Panc1 (cell line): ENCODE measurements at regions of chr16 and their contacts with region 1.

Region 1: DNA sequence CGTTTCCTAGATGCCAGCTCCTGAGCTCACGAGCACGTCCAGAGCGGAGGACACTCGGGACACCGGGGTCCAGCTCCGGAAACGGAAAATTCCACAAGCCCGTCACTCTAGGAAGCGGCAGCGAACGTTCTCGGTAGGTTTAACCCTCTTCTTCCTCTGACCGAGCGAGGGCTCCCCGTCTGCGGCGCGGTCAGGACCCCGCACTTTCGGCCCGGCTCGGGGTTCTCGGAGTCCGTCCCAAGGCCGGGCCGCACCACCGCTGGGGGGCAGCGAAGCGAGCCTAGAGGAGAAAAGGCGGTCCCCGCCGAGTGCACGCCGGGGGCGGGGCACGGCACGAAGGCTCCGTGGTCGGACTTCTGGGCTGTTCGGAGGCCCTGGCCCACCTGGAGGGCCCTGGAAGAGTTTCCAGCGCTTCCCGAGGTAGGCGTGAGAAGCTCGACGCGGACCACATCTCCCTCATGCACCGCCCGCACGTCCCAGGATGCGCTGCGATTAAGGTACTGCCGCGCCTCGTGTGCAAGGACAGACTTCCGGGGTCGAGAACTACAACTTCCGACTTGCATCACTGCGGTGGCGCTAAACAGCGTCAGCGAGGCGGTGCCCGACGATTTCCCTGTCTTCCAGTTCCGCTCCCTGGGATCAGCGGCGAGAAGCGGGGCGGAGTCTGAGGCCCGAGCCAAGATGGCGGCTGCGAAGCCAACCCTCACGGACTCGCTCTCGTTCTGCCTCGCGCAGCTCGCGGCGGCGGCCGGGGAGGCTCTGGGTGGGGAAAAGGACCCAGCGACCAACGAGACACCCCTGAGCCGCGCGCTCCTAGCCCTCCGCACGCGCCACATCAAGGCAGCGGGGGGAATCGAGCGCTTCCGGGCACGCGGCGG is at the start of gene ARMC5:
- DNase-seq: peak; percentile 88
- ATAC-seq: peak; percentile 92
- H3K4me3 ChIP-seq: peak within 1 kb of the TSS; percentile 78 to 93
- H3K27ac ChIP-seq: peak within 1 kb of the TSS; percentile 94
- H3K4me1 ChIP-seq: peaks cover 34% of the 10 kb centered on the region
- H3K27me3 ChIP-seq: no peaks in the 10 kb centered on the region
- CTCF ChIP-seq: peak; percentile 87
- total RNA-seq, gene ARMC5: 19.8 TPM

Region 2: DNA sequence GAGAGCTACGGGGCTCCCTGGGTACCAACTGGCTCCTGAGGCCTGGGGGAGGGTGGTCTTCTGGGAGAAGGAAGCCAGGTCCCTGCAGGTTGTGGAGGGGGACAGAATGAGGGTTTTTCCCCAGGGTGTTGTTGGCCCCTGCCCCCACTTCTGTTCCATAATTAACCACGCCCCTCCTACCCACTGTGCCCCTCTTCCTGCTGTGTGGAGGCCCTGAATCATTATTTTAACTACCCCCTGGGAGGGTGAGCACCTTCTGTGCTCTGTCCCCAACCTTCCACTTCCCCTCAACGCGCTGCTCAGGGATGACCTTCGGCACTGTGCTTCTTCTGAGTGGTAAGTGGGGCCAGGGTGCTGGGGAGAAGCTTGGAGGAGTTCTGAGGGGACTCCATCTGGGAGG is 66.0 kb before region 1 on chr16 and contains the start of gene ITGAD:
- CTCF ChIA-PET with region 1: no interaction called
- POLR2A ChIA-PET with region 1: no interaction called
- in situ Hi-C with region 1: no loop called
- intact Hi-C with region 1: no loop called
- DNase-seq: no peak
- ATAC-seq: no peak
- H3K4me3 ChIP-seq: no peak within 1 kb of the TSS
- H3K27ac ChIP-seq: no peak within 1 kb of the TSS
- H3K4me1 ChIP-seq: no peaks in the 10 kb centered on the region; the same call in 1 of the 2 replicates
- H3K27me3 ChIP-seq: no peaks in the 10 kb centered on the region
- CTCF ChIP-seq: no peak
- total RNA-seq, gene ITGAD: not detected

Region 3: GRCh38 chr16:31499928-31500327 is 40.8 kb after region 1 on chr16:
- CTCF ChIA-PET with region 1: no interaction called
- POLR2A ChIA-PET with region 1: interaction called, 10 read pairs
- in situ Hi-C with region 1: no loop called
- intact Hi-C with region 1: no loop called
- DNase-seq: no peak
- ATAC-seq: no peak
- H3K4me3 ChIP-seq: no peak overlapping the region
- H3K27ac ChIP-seq: no peak overlapping the region
- H3K4me1 ChIP-seq: no peaks in the 10 kb centered on the region
- H3K27me3 ChIP-seq: no peaks in the 10 kb centered on the region
- CTCF ChIP-seq: no peak

Region 4: GRCh38 chr16:31513884-31514283 is 54.8 kb after region 1 on chr16:
- CTCF ChIA-PET with region 1: no interaction called
- POLR2A ChIA-PET with region 1: interaction called, 17 read pairs
- in situ Hi-C with region 1: no loop called
- intact Hi-C with region 1: no loop called
- DNase-seq: no peak
- ATAC-seq: no peak
- H3K4me3 ChIP-seq: no peak overlapping the region
- H3K27ac ChIP-seq: no peak overlapping the region
- H3K4me1 ChIP-seq: peaks cover 5% of the 10 kb centered on the region
- H3K27me3 ChIP-seq: no peaks in the 10 kb centered on the region
- CTCF ChIP-seq: no peak

Region 5: DNA sequence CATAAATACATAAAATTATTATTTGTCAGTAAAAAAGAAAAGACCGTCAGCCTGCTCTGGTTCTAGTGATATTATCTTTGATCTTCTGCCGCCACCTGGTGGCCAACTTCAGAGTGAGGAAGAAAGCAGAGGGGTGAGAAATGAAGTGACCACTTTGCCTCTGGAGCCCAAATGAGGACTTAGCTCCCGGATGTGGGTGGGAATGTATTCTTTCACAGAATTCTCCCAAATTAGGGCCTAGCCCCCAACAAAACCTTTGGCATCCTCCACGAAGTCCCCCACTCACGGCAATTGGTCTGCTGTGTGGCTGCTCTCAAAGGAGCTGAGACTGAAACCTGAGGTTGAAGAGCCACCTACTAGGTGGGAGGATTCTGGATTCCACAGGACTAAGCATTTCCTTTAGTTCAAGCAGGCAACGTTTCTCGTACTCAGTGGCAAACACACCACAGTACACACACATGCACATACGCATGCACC is 409.6 kb after region 1 on chr16:
- CTCF ChIA-PET with region 1: no interaction called
- POLR2A ChIA-PET with region 1: no interaction called
- in situ Hi-C with region 1: no loop called
- intact Hi-C with region 1: loop called (anchors 5 kb)
- DNase-seq: peak; percentile 48
- ATAC-seq: peak; percentile 79
- H3K4me3 ChIP-seq: no peak overlapping the region
- H3K27ac ChIP-seq: no peak overlapping the region
- H3K4me1 ChIP-seq: no peaks in the 10 kb centered on the region
- H3K27me3 ChIP-seq: no peaks in the 10 kb centered on the region
- CTCF ChIP-seq: peak; percentile 81